Pancreas (tissue), 10 donors: ENCODE measurements at regions of chr10 and their contacts with region 1.

Region 1: DNA sequence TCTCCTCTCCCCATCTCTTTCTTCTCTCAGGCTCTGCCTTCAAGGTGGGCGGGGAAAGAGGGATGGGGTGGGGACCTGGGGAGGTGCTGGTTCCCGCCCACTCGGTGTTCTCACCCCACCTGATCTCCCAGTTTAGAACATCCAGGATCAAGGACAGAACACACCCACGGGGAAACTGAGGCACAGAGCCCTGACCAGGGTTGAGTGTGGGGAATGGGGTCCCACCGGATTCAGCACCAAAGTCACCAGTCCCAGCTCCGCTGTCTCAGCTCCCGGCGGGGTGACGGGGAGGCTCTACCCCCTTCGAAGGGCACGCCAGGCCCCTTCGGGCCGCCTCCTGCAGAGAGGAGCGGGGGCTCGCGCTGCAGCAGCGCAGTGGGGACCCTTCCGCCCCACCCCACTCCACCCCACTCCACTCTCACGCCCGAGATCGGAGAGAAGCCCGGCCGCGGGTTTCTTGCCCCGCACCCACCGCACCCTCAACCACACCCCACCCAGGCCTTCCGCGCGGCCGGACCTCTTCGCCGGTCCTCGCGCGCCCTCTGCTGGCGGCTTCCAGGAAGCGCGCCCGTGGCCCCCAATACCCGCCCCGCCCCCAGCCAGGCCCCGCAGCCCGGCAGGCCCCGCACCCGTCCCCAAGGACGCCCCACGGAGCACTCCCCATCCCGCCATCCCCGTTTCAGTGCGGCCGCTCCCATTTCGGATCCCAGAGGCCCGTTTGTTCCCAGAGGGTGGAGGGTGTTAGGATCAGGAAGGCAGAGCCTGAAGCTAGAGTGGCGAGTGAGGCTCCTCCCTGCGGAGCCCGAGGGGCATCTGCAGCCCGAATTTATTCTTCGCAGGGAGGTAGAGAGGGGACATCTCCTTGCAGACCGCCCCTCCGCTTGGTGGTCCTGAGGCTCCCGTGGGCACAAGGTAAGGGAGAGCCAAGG is 18.0 kb downstream of the POLL start:
- DNase-seq: peak; percentile 64 to 97 (median 79)
- ATAC-seq: peak; percentile 89 to 97 (median 94)
- H3K4me3 ChIP-seq: peak overlapping the region; percentile 21 to 68 (median 44)
- H3K27ac ChIP-seq: no peak overlapping the region
- H3K4me1 ChIP-seq: peaks cover 7 to 12% (median 7%) of the 10 kb centered on the region in 3 donors
- H3K27me3 ChIP-seq: peaks cover 0 to 18% (median 2%) of the 10 kb centered on the region in 4 donors
- CTCF ChIP-seq: peak; percentile 78 to 91 (median 84)

Region 2: GRCh38 chr10:101214446-101215396 is 355.4 kb before region 1 on chr10:
- intact Hi-C with region 1: loop called in 2 of 3 experiments (anchors 5 to 10 kb)
- DNase-seq: peak in 5 of 6 donors; percentile 32 to 91 (median 66)
- ATAC-seq: peak; percentile 77 to 88 (median 82)
- H3K4me3 ChIP-seq: peak overlapping the region in 1 of 4 donors; percentile 21
- H3K27ac ChIP-seq: no peak overlapping the region
- H3K4me1 ChIP-seq: peaks cover 0 to 15% (median 0%) of the 10 kb centered on the region in 3 donors
- H3K27me3 ChIP-seq: peaks cover 2 to 66% (median 11%) of the 10 kb centered on the region in 4 donors
- CTCF ChIP-seq: peak; percentile 73 to 85 (median 78)

Region 3: GRCh38 chr10:101272229-101272868 is 297.8 kb before region 1 on chr10:
- intact Hi-C with region 1: loop called in 1 of 3 experiments (anchors 10 kb)
- DNase-seq: peak in 5 of 6 donors; percentile 34 to 79 (median 61)
- ATAC-seq: peak; percentile 86 to 97 (median 93)
- H3K4me3 ChIP-seq: no peak overlapping the region
- H3K27ac ChIP-seq: no peak overlapping the region
- H3K4me1 ChIP-seq: no peaks in the 10 kb centered on the region
- H3K27me3 ChIP-seq: no peaks in the 10 kb centered on the region
- CTCF ChIP-seq: peak; percentile 69 to 72 (median 70)

Region 4: DNA sequence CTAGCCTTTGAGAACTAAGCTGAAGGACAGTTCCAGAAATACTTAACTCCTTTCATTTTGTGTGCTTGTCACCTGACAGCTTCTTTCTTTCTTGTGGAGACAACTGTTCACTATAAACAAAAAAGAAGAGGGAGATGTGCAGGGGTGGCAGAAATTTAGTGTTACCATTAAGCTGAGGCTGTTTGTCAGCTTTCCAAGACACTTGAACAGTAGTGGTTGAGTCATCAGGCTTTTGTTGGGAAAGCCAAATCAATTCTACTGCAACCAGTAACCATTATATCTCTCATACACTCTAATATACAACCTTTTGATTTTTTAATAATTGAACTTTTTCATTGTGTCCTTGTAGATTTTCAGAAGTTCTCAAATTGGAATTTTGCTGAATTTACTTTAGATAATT is 57.4 kb before region 1 on chr10:
- intact Hi-C with region 1: no loop called
- DNase-seq: no peak
- ATAC-seq: no peak
- H3K4me3 ChIP-seq: no peak overlapping the region
- H3K27ac ChIP-seq: no peak overlapping the region
- H3K4me1 ChIP-seq: no peaks in the 10 kb centered on the region
- H3K27me3 ChIP-seq: no peaks in the 10 kb centered on the region
- CTCF ChIP-seq: no peak

Region 5: DNA sequence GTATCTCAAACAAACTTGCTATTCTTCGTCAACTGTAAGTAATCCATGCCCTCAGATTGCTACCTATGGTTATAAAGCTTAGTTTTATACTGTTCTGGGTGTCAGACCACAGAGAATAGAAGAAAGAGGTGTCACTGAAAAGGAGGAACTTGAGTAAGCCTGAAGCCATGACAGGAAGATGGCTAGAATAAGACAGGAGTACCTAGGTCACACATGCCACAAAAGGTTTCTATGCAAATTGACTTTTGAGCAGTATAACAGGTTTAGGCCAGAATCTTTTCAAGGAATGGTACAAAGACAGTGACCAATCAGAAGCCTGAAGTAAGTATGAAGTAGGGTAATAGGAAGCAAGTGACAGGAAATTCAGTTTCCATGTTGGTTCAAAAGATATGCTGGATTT is 101.4 kb after region 1 on chr10:
- intact Hi-C with region 1: no loop called
- DNase-seq: no peak
- ATAC-seq: no peak
- H3K4me3 ChIP-seq: no peak overlapping the region
- H3K27ac ChIP-seq: no peak overlapping the region
- H3K4me1 ChIP-seq: peaks cover 0 to 6% (median 0%) of the 10 kb centered on the region in 3 donors
- H3K27me3 ChIP-seq: no peaks in the 10 kb centered on the region
- CTCF ChIP-seq: no peak

Region 6: DNA sequence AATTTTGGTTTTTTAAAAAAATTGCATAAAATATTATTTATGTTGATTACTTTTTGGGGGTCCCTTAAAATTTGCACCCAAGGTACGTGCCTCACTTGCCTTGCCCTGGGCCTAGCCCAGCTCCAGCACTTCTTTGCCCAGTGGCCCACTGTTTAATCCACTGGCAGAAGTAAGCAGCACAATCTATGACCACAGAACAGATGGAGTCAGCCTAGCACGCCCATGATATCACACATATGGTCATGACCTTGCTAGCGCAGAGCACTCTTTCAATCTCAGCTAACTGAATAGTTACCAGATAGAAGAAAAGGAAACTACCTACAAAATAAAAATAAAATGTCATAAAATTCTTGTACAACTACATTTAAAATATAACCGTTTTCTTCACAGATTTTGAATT is 242.5 kb after region 1 on chr10:
- intact Hi-C with region 1: no loop called
- DNase-seq: no peak
- ATAC-seq: no peak
- H3K4me3 ChIP-seq: no peak overlapping the region
- H3K27ac ChIP-seq: no peak overlapping the region
- H3K4me1 ChIP-seq: peaks cover 10 to 17% (median 15%) of the 10 kb centered on the region in 3 donors
- H3K27me3 ChIP-seq: no peaks in the 10 kb centered on the region
- CTCF ChIP-seq: no peak